PC-3 (cell line): ENCODE measurements at regions of chr11 and their contacts with region 1.

Region 1: DNA sequence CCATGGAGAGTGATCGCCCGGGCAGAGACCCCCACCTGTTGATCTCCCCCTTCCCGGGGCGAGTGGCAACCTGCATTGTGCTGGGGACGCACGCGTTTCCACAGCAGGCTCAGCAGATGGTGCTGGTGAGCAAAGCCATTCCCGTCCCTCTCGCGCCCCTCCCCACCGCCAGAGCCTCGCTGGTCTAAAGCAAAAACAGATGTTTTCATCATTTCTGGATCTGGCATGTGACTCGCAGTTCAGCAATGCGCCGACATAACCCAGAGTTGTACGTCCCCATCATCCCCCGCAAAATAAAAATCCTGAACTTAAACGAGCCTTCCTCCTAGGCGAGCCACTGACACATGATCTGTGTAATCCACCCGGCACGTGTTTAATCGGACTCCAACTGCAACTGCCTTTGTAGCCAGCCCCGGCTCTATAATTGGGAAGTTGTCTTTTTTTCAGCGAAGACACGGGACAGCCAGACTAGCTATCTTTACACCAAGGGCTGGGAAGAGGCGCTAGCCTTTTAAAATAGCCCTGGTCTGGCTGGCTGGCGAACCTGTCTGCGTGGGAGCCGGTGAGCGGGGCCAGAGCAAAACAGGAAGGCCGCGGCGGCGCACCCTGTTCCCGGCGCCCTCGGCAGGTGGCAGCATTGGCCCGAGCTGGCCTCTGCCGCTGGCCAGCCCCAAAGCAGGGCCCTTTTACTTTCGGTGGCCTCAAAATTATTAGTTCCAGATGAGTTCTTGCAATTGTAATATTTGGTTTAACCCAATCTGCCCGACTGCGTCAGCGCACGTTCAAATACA is 203.0 kb upstream of the SORL1-AS1 start:
- DNase-seq: peak; percentile 89
- ATAC-seq: peak; percentile 72
- H3K4me3 ChIP-seq: peak overlapping the region; percentile 70
- H3K27ac ChIP-seq: peak overlapping the region; percentile 76
- H3K4me1 ChIP-seq: peaks cover 29% of the 10 kb centered on the region
- H3K27me3 ChIP-seq: no peaks in the 10 kb centered on the region
- CTCF ChIP-seq: peak; percentile 78

Region 2: DNA sequence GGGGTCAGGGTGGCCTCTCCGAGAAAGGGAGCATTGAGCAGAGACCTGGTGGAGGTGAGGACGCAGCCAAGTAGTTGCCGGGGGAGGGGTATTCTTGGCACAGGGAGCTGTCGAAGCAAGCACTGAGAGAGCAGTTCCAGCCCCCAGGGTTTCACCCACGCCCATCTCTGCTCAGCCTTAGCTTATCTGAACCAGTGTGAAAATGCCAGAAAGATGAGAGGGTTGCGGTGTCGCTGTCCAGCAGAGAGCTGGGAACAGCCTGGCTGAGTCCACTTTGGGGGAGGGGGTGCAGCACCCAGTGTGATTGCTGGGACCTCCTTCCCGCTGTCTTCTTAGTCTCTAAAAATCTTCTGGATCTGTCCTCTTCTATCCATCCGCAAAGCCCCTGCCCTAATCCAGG is 755.1 kb before region 1 on chr11:
- CTCF ChIA-PET with region 1: no interaction called
- POLR2A ChIA-PET with region 1: no interaction called
- intact Hi-C with region 1: no loop called
- DNase-seq: no peak
- ATAC-seq: no peak
- H3K4me3 ChIP-seq: no peak overlapping the region
- H3K27ac ChIP-seq: no peak overlapping the region
- H3K4me1 ChIP-seq: peaks cover 8% of the 10 kb centered on the region; the same call in 1 of the 2 replicates
- H3K27me3 ChIP-seq: peaks cover 89% of the 10 kb centered on the region
- CTCF ChIP-seq: no peak

Region 3: DNA sequence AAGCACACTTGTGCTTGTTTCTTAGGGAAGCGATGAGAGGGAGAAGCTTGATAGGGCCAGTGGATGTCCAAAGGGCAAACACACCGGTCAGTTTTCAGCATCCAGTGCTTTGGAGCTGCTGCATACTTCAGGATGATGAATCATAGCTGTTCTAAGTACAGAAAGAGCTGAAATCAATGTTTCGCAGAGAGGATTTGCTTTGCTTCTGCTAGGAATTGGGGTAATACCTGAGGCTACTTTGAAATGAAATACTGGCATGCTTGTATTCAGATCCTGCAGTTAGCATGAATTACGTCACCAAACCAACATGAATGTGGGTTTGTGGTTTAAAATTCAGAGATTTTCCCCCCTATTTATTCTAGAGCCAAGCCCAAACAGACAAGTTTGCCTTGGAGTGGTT is 404.9 kb before region 1 on chr11:
- CTCF ChIA-PET with region 1: no interaction called
- POLR2A ChIA-PET with region 1: no interaction called
- intact Hi-C with region 1: no loop called
- DNase-seq: peak; percentile 86
- ATAC-seq: peak; percentile 50
- H3K4me3 ChIP-seq: no peak overlapping the region
- H3K27ac ChIP-seq: peak overlapping the region; percentile 62
- H3K4me1 ChIP-seq: peaks cover 47% of the 10 kb centered on the region
- H3K27me3 ChIP-seq: no peaks in the 10 kb centered on the region
- CTCF ChIP-seq: no peak

Region 4: DNA sequence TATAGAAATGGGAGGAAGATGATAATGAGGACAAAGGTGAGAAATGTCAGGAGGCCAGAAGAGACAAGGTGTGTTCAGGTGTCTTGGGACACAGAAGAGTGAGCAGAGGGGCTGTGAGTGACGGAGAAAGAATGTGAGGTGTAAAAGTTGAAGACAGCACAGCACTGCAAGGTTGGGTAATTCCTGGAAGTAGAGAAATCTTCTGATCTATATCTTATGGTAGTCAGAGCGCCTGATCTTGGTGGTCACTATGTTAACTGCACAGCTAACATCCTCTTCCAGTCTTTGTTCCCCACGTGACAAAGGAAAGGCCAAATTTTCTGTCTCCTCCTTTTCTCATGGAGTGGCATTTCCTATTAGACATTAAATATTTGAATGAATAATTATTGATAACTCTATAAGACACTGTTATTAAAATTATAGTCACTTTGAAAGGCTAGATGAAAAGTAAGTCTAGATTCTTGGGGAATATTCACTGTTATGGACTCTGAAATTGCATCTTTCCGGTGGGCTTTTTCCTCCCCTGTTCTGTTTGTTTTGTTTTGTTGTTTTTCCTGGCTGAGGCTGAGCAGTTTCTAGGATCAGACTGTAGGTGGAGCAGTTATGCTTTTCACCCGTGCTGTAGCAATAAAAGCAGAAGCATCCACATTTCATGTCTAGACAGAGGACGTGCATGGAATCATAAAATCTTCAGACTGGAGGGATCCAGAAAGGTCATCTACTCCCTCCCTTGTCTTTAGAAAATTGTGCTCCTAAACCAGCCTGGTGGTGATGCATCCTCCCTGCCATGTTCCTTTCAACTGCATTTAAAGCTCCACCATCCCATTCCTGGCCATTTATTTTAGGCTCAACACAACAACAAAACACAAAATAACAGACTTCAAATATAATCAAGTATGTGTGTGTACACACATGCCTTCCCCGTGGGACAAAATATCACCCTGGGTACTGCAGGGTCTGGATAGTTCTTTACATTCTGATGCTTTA is 336.6 kb before region 1 on chr11:
- CTCF ChIA-PET with region 1: no interaction called
- POLR2A ChIA-PET with region 1: no interaction called
- intact Hi-C with region 1: loop called (anchors 10 kb)
- DNase-seq: peak; percentile 74
- ATAC-seq: peak; percentile 66
- H3K4me3 ChIP-seq: no peak overlapping the region
- H3K27ac ChIP-seq: no peak overlapping the region
- H3K4me1 ChIP-seq: no peaks in the 10 kb centered on the region
- H3K27me3 ChIP-seq: no peaks in the 10 kb centered on the region
- CTCF ChIP-seq: peak; percentile 96

Region 5: GRCh38 chr11:121482231-121483129 is 173.3 kb before region 1 on chr11:
- CTCF ChIA-PET with region 1: no interaction called
- POLR2A ChIA-PET with region 1: no interaction called
- intact Hi-C with region 1: no loop called
- DNase-seq: no peak
- ATAC-seq: no peak
- H3K4me3 ChIP-seq: no peak overlapping the region
- H3K27ac ChIP-seq: no peak overlapping the region
- H3K4me1 ChIP-seq: peaks cover 26% of the 10 kb centered on the region
- H3K27me3 ChIP-seq: no peaks in the 10 kb centered on the region
- CTCF ChIP-seq: no peak

Region 6: DNA sequence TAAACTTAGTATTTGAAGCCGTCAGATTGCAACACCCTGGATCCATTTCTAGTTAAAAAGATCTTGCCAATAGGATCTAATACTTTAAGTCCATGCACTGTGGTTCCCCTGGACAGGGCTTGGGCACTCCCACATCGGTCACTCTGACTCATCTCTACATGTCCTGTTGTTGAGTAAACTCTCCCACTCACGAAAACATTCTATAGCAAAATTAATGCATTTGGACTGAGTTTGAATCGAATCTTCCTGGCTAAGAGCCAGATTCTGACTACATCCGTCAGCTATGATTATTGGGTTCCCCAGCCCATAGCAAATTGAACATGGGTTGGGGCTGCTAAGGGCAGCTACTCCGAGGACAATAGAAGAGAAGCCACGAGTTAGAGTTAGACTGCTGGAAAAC is 20.8 kb before region 1 on chr11:
- CTCF ChIA-PET with region 1: interaction called, 3 read pairs
- POLR2A ChIA-PET with region 1: no interaction called
- intact Hi-C with region 1: loop called (anchors 1 kb)
- DNase-seq: peak; percentile 97
- ATAC-seq: peak; percentile 92
- H3K4me3 ChIP-seq: peak overlapping the region; percentile 22; the same call in 1 of the 2 replicates
- H3K27ac ChIP-seq: peak overlapping the region; percentile 77
- H3K4me1 ChIP-seq: peaks cover 39% of the 10 kb centered on the region
- H3K27me3 ChIP-seq: no peaks in the 10 kb centered on the region
- CTCF ChIP-seq: no peak

Region 7: GRCh38 chr11:121964591-121964990 is 308.9 kb after region 1 on chr11:
- CTCF ChIA-PET with region 1: no interaction called
- POLR2A ChIA-PET with region 1: no interaction called
- intact Hi-C with region 1: loop called (anchors 5 kb)
- DNase-seq: peak; percentile 88
- ATAC-seq: peak; percentile 93
- H3K4me3 ChIP-seq: no peak overlapping the region; the same call in 1 of the 2 replicates
- H3K27ac ChIP-seq: peak overlapping the region; percentile 60
- H3K4me1 ChIP-seq: peaks cover 19% of the 10 kb centered on the region
- H3K27me3 ChIP-seq: no peaks in the 10 kb centered on the region
- CTCF ChIP-seq: peak; percentile 25; the same call in 1 of the 2 replicates

Region 8: GRCh38 chr11:122101625-122102291 is 446.0 kb after region 1 on chr11:
- CTCF ChIA-PET with region 1: interaction called, 7 read pairs
- POLR2A ChIA-PET with region 1: no interaction called
- intact Hi-C with region 1: loop called (anchors 1 kb)
- DNase-seq: no peak
- ATAC-seq: peak; percentile 32
- H3K4me3 ChIP-seq: no peak overlapping the region
- H3K27ac ChIP-seq: peak overlapping the region; percentile 53
- H3K4me1 ChIP-seq: peaks cover 91% of the 10 kb centered on the region
- H3K27me3 ChIP-seq: no peaks in the 10 kb centered on the region
- CTCF ChIP-seq: peak; percentile 51

Region 9: GRCh38 chr11:122505304-122506006 is 849.7 kb after region 1 on chr11:
- CTCF ChIA-PET with region 1: interaction called, 14 read pairs
- POLR2A ChIA-PET with region 1: no interaction called
- intact Hi-C with region 1: loop called (anchors 1 kb)
- DNase-seq: peak; percentile 92
- ATAC-seq: peak; percentile 100
- H3K4me3 ChIP-seq: no peak overlapping the region
- H3K27ac ChIP-seq: no peak overlapping the region
- H3K4me1 ChIP-seq: no peaks in the 10 kb centered on the region
- H3K27me3 ChIP-seq: peaks cover 81% of the 10 kb centered on the region
- CTCF ChIP-seq: peak; percentile 95